Esophagus squamous epithelium (tissue), 5 donors: ENCODE measurements at regions of chr14 and their contacts with region 1.

Region 1: GRCh38 chr14:54773171-54773975 is 129.3 kb downstream of the GCH1 start:
- DNase-seq: peak; percentile 64
- H3K4me3 ChIP-seq: peak overlapping the region in 1 of 4 donors; percentile 19
- H3K27ac ChIP-seq: peak overlapping the region; percentile 65 to 91 (median 86)
- H3K4me1 ChIP-seq: peaks cover 19 to 43% (median 22%) of the 10 kb centered on the region in 3 donors
- H3K27me3 ChIP-seq: peaks cover 0 to 16% (median 0%) of the 10 kb centered on the region in 4 donors
- CTCF ChIP-seq: peak; percentile 38 to 79 (median 64)
- POLR2A ChIP-seq: no peak

Region 2: GRCh38 chr14:54902521-54903420 is 129.4 kb after region 1 on chr14 and contains the start of gene GCH1:
- intact Hi-C with region 1: loop called (anchors 10 kb)
- DNase-seq: peak; percentile 12
- H3K4me3 ChIP-seq: peak within 1 kb of the TSS; percentile 66 to 94 (median 78)
- H3K27ac ChIP-seq: peak within 1 kb of the TSS; percentile 87 to 96 (median 92)
- H3K4me1 ChIP-seq: peaks cover 0 to 21% (median 0%) of the 10 kb centered on the region in 3 donors
- H3K27me3 ChIP-seq: no peaks in the 10 kb centered on the region
- CTCF ChIP-seq: peak; percentile 21 to 59 (median 40)
- POLR2A ChIP-seq: peak in 2 of 4 donors; percentile 81 to 90
- total RNA-seq, gene GCH1: 9.3 to 19.8 (median 15.5) TPM